ENCODE measurements at regions of chr9 and their contacts with region 1.

Region 1: DNA sequence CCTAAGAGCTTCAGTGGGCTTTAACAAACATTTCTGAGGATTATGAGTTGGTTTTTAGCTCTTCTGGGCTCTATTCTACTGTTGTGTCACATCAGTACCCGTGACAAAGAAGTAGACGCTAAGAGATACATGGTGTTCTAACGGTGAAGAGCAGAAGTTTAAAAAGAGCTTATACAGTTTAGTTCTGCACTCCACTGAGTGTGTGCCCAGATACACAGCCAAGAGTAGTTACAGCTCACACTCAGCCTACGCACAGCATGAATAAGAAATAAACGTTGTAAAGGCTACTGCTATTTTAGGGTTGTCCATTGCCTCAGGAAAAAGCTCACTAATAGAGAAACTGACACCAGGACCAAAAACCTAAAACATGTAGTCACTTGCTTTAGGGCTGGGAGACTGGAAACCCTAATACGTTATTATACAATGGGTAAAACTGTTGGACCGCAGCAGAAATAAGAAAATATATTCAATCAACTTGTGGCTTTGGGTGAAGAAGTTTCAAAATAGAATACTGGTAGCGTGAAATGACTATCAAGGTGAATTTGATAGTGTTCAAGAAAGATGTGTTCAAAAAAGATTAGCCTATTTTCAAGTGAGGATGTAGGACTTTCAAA is 34.7 kb downstream of the PSIP1 start:
- DNase-seq: no peak
- H3K4me3 ChIP-seq: no peak overlapping the region
- H3K27me3 ChIP-seq: no peaks in the 10 kb centered on the region
- CTCF ChIP-seq: no peak

Region 2: DNA sequence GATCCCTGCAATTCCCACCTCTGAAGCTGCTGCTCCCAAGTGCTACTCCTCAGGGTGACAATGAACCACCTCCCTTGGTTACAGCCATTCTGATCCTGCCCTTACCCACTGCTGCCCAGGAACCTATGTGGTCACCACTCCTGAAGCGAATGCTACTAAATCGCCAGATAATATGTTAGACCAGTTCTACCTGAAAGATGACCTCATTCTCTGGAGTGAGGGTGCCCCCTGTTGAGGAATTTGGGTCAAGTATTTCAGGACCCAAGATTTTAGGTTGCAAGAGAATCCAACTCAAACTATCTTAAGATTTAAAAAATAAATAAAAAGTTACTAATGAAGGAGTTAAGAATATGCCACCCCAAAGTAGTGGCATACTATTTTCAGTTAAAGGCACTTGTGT is 59.1 kb before region 1 on chr9:
- CTCF ChIA-PET with region 1: no interaction called
- POLR2A ChIA-PET with region 1: no interaction called
- DNase-seq: no peak
- H3K4me3 ChIP-seq: no peak overlapping the region
- H3K27me3 ChIP-seq: no peaks in the 10 kb centered on the region
- CTCF ChIP-seq: peak; percentile 44

Region 3: GRCh38 chr9:15485836-15486666 is 10.0 kb after region 1 on chr9:
- CTCF ChIA-PET with region 1: interaction called, 10 read pairs
- POLR2A ChIA-PET with region 1: no interaction called
- DNase-seq: no peak
- H3K4me3 ChIP-seq: no peak overlapping the region
- H3K27me3 ChIP-seq: no peaks in the 10 kb centered on the region
- CTCF ChIP-seq: peak; percentile 62

Region 4: DNA sequence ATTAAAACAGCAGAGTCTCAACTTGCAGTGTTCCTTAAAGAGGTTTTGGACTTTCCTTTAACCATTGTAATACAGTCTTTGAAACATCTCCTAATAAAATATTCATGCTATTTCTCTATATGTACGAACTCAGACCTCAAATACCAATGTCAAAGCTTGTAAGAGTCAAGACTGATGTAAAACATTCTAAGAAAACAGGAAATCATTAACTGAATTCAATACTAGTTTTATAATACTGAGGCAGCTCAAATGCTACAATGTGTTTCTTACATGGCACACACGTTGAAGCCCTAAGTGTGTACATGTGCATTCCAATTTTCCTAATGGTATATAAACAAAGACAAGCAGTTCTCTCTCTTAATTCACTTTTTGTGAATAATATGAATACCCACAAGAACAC is 23.1 kb after region 1 on chr9:
- CTCF ChIA-PET with region 1: no interaction called
- POLR2A ChIA-PET with region 1: no interaction called
- DNase-seq: no peak
- H3K4me3 ChIP-seq: no peak overlapping the region
- H3K27me3 ChIP-seq: no peaks in the 10 kb centered on the region
- CTCF ChIP-seq: no peak

Region 5: DNA sequence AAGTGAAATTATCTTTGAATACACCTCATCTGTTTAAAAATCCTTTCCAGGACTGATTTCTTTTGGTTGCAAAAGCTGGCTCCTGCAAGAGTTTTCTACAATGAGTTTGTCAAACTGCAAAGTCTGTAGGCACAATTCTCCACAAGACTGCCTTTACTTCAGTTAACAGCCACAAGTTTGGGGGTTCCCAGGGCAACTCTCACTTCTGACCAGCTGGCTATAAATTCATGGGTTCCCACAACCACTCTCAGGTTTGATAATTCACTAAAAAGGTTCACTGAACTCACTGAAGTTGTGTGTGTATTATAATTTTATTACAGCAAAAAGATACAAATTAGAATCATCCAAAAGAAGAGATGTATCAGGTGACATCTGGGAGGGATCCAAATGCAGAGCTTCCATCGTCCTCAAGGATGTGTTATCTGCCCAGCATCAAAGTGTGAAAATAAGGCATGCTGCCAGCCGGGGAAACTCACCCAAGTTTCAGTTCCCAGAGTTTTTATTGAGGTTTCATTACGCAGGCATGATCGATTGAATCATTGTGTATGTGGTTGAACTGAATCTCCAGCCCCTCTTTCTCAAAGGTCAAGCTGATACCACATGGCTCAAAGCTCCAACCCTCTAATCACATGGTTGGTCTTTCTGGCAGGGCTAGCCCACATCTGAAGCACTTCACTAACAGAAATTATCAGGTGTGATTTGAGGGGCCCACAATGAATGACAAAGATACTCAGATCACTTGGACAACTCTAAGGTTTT is 53.7 kb after region 1 on chr9:
- CTCF ChIA-PET with region 1: no interaction called
- POLR2A ChIA-PET with region 1: no interaction called
- DNase-seq: no peak
- H3K4me3 ChIP-seq: no peak overlapping the region
- H3K27me3 ChIP-seq: no peaks in the 10 kb centered on the region
- CTCF ChIP-seq: no peak

Region 6: GRCh38 chr9:15824310-15824709 is 348.3 kb after region 1 on chr9:
- CTCF ChIA-PET with region 1: no interaction called
- POLR2A ChIA-PET with region 1: no interaction called
- DNase-seq: no peak
- H3K4me3 ChIP-seq: no peak overlapping the region
- H3K27me3 ChIP-seq: no peaks in the 10 kb centered on the region
- CTCF ChIP-seq: peak; percentile 35; the same call in 1 of the 2 replicates

Measured in BJ (cell line).